Ascending aorta (tissue), 2 donors: ENCODE measurements at regions of chr13 and their contacts with region 1.

Region 1: DNA sequence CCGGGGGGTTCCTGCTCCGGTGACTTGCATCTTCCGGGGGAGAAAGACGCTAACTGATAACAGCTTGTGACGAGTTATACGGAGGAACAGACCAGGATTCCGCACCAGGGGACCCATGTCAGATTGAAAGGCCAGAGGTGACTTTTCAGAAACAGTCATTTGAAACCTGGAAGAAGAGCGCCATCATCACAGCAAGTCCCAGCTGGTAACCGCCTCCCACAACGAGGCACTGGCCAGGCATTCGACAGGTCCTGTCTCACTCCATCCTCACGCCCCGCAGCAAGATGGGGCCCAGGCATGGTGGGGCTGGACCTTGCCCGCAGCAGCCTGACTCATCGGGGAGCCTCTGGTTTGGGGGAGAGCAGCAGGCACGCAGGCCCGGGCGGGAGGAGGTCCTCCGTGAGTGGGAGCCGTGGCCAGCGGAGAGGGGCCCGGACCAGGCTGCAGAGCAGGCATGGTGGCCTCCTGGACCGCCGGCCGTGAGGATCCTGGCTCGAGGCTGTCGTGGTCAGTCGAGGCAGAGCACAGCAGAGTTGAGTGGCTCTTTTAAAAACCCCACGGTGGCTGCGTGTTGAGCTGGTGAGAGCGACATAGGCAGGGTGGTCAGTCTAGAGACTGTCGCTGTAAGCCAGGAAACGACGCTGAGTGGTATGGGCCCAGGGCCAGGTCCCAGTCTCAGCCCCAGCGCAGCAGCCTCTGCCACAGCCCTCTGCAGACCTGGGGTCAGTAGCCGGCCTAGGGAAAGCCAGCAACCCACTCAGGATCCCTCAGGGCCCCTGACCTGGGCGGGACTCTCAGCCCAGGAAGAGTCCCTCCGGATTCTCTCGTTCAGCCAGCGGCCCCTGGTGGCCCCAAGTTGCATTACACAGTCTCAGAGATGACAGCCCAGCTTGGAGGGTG is 94.9 kb upstream of the MCF2L start:
- DNase-seq: peak in 1 of 2 donors; percentile 86
- H3K4me3 ChIP-seq: peak overlapping the region in 1 of 2 donors; percentile 26
- H3K27ac ChIP-seq: no peak overlapping the region
- H3K4me1 ChIP-seq: peaks cover 0 to 3% of the 10 kb centered on the region in 2 donors
- H3K27me3 ChIP-seq: no peaks in the 10 kb centered on the region
- CTCF ChIP-seq: peak; percentile 85 to 95 (median 93)

Region 2: DNA sequence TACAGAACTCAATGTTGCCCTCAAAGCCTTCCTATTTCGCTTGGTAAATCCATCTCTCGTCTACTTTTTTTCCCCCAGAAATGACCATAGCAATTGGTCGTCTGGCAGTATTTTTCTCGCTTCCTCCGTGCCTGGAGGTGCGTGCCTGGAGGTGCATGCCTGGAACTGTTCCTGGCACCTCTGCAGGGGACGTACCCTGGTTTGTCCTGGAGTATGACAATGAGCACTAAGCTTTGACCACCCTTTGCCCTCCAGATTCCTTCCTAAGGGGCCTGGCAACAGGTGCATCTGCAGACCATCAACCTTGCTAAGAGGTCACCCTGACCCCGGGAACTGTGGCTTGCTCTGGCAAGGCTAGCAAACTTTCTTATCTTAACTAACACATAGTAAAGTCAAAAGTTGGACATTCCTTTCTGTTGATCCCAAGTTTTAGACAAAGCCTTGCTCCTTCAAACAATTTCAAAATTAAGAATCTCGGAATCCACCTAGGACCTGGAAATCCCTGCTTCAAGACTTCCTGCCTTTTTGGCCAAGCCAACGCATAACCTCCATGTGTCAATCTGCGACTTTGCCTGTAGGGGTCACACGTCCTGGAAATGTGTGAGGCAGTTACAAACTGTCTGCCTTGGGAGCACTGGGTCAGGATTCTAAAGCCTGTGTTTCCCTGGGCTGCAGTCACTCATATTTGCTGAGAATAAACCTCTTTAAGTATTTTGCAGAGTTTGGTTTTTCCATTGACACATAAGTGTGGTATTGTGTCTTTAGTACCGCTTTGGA is 257.3 kb before region 1 on chr13:
- intact Hi-C with region 1: loop called (anchors 5 kb)
- DNase-seq: no peak
- H3K4me3 ChIP-seq: no peak overlapping the region
- H3K27ac ChIP-seq: no peak overlapping the region
- H3K4me1 ChIP-seq: no peaks in the 10 kb centered on the region
- H3K27me3 ChIP-seq: no peaks in the 10 kb centered on the region
- CTCF ChIP-seq: peak in 1 of 3 experiments; percentile 45

Region 3: GRCh38 chr13:112638157-112638750 is 235.8 kb before region 1 on chr13:
- intact Hi-C with region 1: loop called (anchors 1 kb)
- DNase-seq: no peak
- H3K4me3 ChIP-seq: no peak overlapping the region
- H3K27ac ChIP-seq: no peak overlapping the region
- H3K4me1 ChIP-seq: peaks cover 0 to 2% of the 10 kb centered on the region in 2 donors
- H3K27me3 ChIP-seq: no peaks in the 10 kb centered on the region
- CTCF ChIP-seq: no peak